ENCODE measurements at regions of chr16 and their contacts with region 1.

Region 1: GRCh38 chr16:23842137-23842600 is 6.4 kb downstream of the PRKCB start:
- DNase-seq: no peak
- H3K4me3 Mint-ChIP-seq: peak overlapping the region; percentile 64
- H3K27ac Mint-ChIP-seq: peak overlapping the region; percentile 93
- H3K4me1 Mint-ChIP-seq: peaks cover 83% of the 10 kb centered on the region
- H3K27me3 Mint-ChIP-seq: peaks cover 1% of the 10 kb centered on the region

Region 2: DNA sequence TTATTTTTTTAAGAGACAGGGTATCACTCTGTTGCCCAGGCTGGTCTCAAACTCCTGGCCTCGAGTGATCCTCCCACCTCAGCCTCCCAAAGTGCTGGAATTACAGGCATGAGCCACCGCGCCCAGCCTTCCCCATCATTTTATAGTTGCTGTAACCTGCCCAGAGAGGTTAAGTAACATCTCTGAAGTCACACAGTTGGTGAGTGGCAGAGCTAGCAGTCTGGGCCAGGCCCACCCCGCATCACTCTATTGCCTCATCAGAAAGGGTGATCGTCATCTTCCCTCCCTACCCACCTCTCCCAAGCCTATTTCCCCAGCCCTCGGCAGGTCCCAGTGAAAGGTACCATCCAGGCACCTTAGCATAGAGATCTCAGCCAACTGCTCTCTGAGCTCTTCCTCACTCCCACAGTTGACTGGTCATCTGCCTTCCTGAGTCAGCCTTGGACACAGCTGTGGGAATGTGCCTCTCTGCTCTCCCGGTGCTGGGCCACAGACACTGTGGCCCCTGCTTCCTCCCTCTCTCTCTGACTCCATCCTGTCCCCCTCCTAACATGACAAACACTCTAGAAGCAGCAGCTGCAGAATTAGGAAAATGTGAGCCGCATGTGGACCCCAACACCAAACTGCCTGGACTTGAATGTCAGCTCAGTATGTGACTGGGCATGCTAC is 482.9 kb before region 1 on chr16:
- intact Hi-C with region 1: no loop called
- DNase-seq: no peak
- H3K4me3 Mint-ChIP-seq: no peak overlapping the region
- H3K27ac Mint-ChIP-seq: no peak overlapping the region
- H3K4me1 Mint-ChIP-seq: no peaks in the 10 kb centered on the region
- H3K27me3 Mint-ChIP-seq: no peaks in the 10 kb centered on the region

Region 3: DNA sequence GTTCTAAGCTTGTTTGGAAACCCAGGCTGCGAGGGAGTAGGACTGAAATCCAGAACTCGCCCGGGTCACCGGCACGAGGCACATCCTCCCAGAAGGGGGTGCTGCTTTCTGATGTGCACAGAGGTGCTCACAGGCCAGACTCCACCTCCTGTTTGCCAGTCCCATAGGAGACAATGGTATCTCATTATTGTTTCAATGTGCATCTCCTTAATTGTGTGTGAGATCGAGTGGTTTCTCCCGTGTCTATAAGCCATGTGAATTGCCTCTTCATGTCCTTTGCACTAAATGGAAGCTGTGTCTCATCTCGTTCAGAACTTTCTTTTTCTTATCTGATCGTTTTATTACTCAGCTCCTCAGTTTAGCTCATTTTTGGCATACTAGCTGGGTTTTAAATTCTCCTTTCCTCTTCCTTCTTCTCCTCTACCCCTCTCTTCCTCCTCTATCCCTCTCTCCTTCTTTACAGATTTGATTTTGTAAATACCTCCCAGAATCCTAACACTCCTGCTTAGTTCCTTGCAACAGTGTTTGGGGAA is 38.5 kb before region 1 on chr16:
- intact Hi-C with region 1: loop called (anchors 1 kb)
- DNase-seq: peak; percentile 62
- H3K4me3 Mint-ChIP-seq: no peak overlapping the region
- H3K27ac Mint-ChIP-seq: peak overlapping the region; percentile 27
- H3K4me1 Mint-ChIP-seq: peaks cover 19% of the 10 kb centered on the region
- H3K27me3 Mint-ChIP-seq: peaks cover 8% of the 10 kb centered on the region

Region 4: GRCh38 chr16:23852794-23853562 is 10.8 kb after region 1 on chr16:
- intact Hi-C with region 1: loop called (anchors 1 kb)
- DNase-seq: no peak
- H3K4me3 Mint-ChIP-seq: no peak overlapping the region
- H3K27ac Mint-ChIP-seq: no peak overlapping the region
- H3K4me1 Mint-ChIP-seq: peaks cover 79% of the 10 kb centered on the region
- H3K27me3 Mint-ChIP-seq: no peaks in the 10 kb centered on the region

Region 5: GRCh38 chr16:23869052-23869451 is 26.9 kb after region 1 on chr16:
- intact Hi-C with region 1: loop called (anchors 1 kb)
- DNase-seq: peak; percentile 39
- H3K4me3 Mint-ChIP-seq: peak overlapping the region; percentile 45
- H3K27ac Mint-ChIP-seq: peak overlapping the region; percentile 86
- H3K4me1 Mint-ChIP-seq: peaks cover 67% of the 10 kb centered on the region
- H3K27me3 Mint-ChIP-seq: no peaks in the 10 kb centered on the region

Region 6: DNA sequence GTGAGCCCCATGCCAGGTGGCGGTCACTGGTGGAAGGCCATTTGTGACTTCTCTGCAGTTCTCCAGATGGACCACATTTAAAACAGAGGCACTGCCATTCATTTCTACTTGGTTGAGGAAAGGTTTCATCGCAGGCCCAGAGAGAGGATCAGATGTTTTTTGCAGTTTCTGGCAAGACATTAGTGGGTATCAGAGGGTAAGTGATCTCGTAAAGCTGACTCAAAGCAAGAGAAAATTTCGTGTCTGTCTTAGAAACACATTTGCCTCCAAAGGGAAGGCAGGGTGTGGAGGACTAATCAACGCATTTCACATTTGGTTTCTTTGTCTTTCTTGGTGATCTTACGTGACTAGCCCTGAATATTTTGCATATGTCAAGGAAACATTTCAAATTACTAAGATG is 75.5 kb after region 1 on chr16:
- intact Hi-C with region 1: no loop called
- DNase-seq: no peak
- H3K4me3 Mint-ChIP-seq: no peak overlapping the region
- H3K27ac Mint-ChIP-seq: peak overlapping the region; percentile 38
- H3K4me1 Mint-ChIP-seq: peaks cover 34% of the 10 kb centered on the region
- H3K27me3 Mint-ChIP-seq: no peaks in the 10 kb centered on the region

Region 7: DNA sequence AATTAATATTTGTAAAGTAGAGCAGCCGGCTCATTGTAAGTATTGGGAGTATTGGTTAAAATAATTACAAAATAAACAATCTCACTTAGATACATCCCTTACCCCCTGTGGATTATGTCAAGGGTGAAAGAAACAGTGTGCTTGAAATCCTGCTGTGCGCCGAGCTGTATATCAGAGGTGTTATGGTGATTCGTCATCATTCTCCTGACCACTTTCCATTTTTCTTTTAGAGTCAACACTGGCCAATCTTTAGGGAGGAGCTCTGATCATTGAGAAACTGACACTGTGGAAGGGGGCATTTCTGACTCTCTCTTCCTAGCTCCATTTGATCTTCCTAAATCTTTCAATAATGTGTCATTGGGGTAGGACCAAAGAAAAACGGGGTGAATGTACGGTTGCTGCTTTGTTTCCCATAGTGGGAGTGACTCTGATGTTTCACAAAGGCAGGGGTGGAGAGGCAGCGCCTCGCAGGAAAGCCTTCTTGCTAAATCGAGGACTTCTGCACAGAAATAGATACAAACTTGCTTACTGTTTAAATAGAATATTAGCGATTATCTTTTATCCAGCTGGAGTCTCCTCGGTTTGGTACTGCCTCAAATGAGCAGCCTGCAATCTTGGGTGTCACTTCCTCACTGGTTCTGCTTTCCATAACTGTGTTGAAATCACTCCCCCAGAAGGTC is 117.0 kb after region 1 on chr16:
- intact Hi-C with region 1: loop called (anchors 1 kb)
- DNase-seq: no peak
- H3K4me3 Mint-ChIP-seq: peak overlapping the region; percentile 54
- H3K27ac Mint-ChIP-seq: peak overlapping the region; percentile 82
- H3K4me1 Mint-ChIP-seq: peaks cover 66% of the 10 kb centered on the region
- H3K27me3 Mint-ChIP-seq: no peaks in the 10 kb centered on the region

Region 8: GRCh38 chr16:24151482-24151939 is 309.3 kb after region 1 on chr16:
- intact Hi-C with region 1: loop called (anchors 10 kb)
- DNase-seq: peak; percentile 1
- H3K4me3 Mint-ChIP-seq: peak overlapping the region; percentile 2
- H3K27ac Mint-ChIP-seq: peak overlapping the region; percentile 77
- H3K4me1 Mint-ChIP-seq: peaks cover 36% of the 10 kb centered on the region
- H3K27me3 Mint-ChIP-seq: no peaks in the 10 kb centered on the region

Region 9: GRCh38 chr16:25014500-25015147 is 1172.5 kb after region 1 on chr16:
- intact Hi-C with region 1: loop called (anchors 10 kb)
- DNase-seq: no peak
- H3K4me3 Mint-ChIP-seq: peak overlapping the region; percentile 94
- H3K27ac Mint-ChIP-seq: peak overlapping the region; percentile 89
- H3K4me1 Mint-ChIP-seq: peaks cover 73% of the 10 kb centered on the region
- H3K27me3 Mint-ChIP-seq: no peaks in the 10 kb centered on the region